ENCODE measurements at regions of chr15 and their contacts with region 1.

Region 1: DNA sequence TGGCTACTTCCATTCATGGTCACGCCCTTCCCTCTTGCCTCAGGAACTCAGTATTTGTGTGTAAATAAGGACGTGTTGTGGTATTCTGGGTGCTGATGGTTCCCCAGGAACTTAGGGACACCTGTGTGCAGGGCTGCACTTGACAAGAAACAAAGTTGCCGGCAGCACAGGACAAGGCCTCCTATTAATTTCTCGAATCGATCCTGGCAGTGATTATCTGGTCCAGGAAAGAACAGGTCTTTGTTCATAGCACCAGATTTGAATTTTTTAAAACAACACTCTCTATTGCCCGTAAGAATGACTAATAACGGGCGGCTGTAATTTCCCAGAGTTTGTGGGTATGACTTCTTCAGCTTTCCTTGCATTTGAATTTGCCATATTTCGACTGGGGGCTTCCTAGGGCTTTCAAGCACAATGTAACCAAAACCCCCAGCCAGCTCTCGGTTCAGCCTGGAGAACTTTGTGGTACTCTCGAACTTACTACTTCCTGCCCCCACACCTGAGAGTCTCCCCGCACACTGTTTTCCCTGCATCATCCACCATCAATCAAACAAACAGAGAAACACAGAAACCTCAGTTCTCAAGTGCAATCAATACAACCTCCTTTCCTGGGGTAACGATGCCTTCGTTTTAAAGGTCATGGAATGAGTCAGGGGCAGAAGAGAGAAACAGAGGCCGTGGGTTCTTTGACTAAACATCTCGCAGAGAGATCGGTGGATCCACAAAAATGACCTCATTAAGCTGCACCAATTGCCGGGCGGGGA is 241.7 kb upstream of the ICE2 start:
- DNase-seq: peak; percentile 85
- ATAC-seq: peak; percentile 91
- H3K4me3 Mint-ChIP-seq: peak overlapping the region; percentile 43
- H3K27ac Mint-ChIP-seq: peak overlapping the region; percentile 90
- H3K4me1 Mint-ChIP-seq: peaks cover 48% of the 10 kb centered on the region
- H3K27me3 Mint-ChIP-seq: peaks cover 3% of the 10 kb centered on the region
- CTCF ChIP-seq: no peak

Region 2: DNA sequence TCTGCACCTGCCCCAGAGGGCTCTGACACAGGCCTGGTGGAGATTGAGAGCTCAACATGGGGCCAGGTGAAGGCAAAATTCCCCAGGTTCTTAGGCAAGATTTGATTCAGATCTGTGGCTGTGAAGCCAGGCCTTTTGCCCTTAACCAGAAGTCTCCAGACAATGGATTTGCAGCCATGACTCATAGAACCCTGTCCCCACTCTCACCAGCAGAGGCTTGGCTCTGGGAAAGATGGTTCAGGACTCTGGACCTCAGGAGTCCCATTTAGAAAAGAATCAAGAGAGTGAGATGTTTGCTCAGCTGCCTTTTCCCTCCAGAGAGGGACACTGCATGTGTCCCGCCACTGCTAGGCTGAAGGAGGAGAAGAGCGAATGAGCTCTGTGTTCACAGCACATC is 119.6 kb after region 1 on chr15:
- CTCF ChIA-PET with region 1: no interaction called
- POLR2A ChIA-PET with region 1: interaction called, 3 read pairs
- intact Hi-C with region 1: loop called (anchors 5 kb)
- DNase-seq: no peak
- ATAC-seq: no peak
- H3K4me3 Mint-ChIP-seq: peak overlapping the region; percentile 62
- H3K27ac Mint-ChIP-seq: peak overlapping the region; percentile 25
- H3K4me1 Mint-ChIP-seq: peaks cover 77% of the 10 kb centered on the region
- H3K27me3 Mint-ChIP-seq: peaks cover 1% of the 10 kb centered on the region
- CTCF ChIP-seq: no peak

Measured in activated CD8-positive, alpha-beta T cell treated with anti-CD3 and anti-CD28 coated beads for 36 hours (primary cell).